ENCODE measurements at regions of chr12 and their contacts with region 1.

Region 1: GRCh38 chr12:104108755-104109445 is 29.1 kb downstream of the NFYB start:
- DNase-seq: peak; percentile 93
- H3K4me3 Mint-ChIP-seq: no peak overlapping the region
- H3K27ac Mint-ChIP-seq: no peak overlapping the region
- H3K4me1 Mint-ChIP-seq: peaks cover 11% of the 10 kb centered on the region
- H3K27me3 Mint-ChIP-seq: no peaks in the 10 kb centered on the region

Region 2: GRCh38 chr12:103751171-103751570 is 357.7 kb before region 1 on chr12:
- CTCF ChIA-PET with region 1: no interaction called
- POLR2A ChIA-PET with region 1: no interaction called
- DNase-seq: no peak
- H3K4me3 Mint-ChIP-seq: no peak overlapping the region
- H3K27ac Mint-ChIP-seq: no peak overlapping the region
- H3K4me1 Mint-ChIP-seq: no peaks in the 10 kb centered on the region
- H3K27me3 Mint-ChIP-seq: peaks cover 1% of the 10 kb centered on the region

Region 3: GRCh38 chr12:103884316-103884715 is 224.6 kb before region 1 on chr12:
- CTCF ChIA-PET with region 1: interaction called, 10 read pairs
- POLR2A ChIA-PET with region 1: no interaction called
- DNase-seq: peak; percentile 42
- H3K4me3 Mint-ChIP-seq: no peak overlapping the region
- H3K27ac Mint-ChIP-seq: no peak overlapping the region
- H3K4me1 Mint-ChIP-seq: peaks cover 14% of the 10 kb centered on the region
- H3K27me3 Mint-ChIP-seq: no peaks in the 10 kb centered on the region

Region 4: DNA sequence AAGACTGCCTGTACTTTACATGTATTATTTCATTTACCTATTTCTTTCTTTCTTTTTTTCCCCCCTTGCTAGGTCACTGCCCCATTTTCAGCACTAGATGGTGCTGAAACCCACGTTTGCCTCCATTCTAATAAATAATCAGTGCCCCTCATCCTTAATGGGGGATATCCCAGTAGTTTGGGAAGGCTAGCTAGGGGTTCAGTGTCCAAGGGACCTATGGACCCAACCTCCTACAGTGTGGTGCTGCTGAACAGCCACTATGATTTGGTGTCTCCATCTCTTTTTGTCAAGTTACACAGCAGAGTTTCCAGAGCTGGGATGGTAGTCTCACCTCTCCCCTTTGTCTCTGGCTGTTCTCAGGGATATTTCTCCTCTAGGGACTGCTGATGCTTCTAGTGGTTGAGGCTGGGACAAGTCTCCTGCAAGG is 51.1 kb before region 1 on chr12:
- CTCF ChIA-PET with region 1: interaction called, 12 read pairs
- POLR2A ChIA-PET with region 1: no interaction called
- DNase-seq: no peak
- H3K4me3 Mint-ChIP-seq: no peak overlapping the region
- H3K27ac Mint-ChIP-seq: no peak overlapping the region
- H3K4me1 Mint-ChIP-seq: no peaks in the 10 kb centered on the region
- H3K27me3 Mint-ChIP-seq: peaks cover 46% of the 10 kb centered on the region